PC-9 (cell line): ENCODE measurements at regions of chr6 and their contacts with region 1.

Region 1: GRCh38 chr6:4272996-4273395 is 137.6 kb upstream of the ECI2 start:
- DNase-seq: no peak
- H3K4me3 ChIP-seq: no peak overlapping the region
- H3K27ac ChIP-seq: no peak overlapping the region
- H3K4me1 ChIP-seq: no peaks in the 10 kb centered on the region
- H3K27me3 ChIP-seq: no peaks in the 10 kb centered on the region
- CTCF ChIP-seq: no peak

Region 2: DNA sequence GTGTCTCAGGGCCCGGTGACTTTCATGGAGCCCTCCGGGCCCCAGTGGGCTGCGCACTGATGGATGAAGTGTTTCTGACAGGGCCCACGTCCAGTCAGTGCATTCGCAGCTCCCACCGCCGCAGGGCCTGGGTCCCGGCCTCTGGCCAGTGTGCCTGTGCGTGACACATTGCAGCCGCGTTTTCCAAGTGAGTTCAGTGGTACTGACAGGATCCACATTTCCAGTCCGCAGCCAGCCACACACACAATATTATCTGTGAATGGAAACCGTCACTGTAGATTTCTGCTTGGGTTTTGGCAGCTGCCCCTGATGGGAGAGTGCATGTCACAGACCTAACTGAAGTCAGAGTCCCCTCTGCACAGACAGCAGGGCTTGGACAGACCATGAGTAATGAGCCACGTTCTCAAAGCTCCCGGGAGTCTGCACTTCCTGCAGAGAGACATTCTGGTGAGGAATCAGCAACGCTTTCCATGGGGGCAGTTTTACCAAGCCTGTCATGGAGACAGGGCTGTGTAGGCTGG is 1693.7 kb before region 1 on chr6:
- CTCF ChIA-PET with region 1: interaction called, 13 read pairs
- POLR2A ChIA-PET with region 1: no interaction called
- intact Hi-C with region 1: no loop called
- DNase-seq: no peak
- H3K4me3 ChIP-seq: no peak overlapping the region
- H3K27ac ChIP-seq: peak overlapping the region; percentile 83
- H3K4me1 ChIP-seq: peaks cover 20% of the 10 kb centered on the region
- H3K27me3 ChIP-seq: no peaks in the 10 kb centered on the region
- CTCF ChIP-seq: no peak

Region 3: DNA sequence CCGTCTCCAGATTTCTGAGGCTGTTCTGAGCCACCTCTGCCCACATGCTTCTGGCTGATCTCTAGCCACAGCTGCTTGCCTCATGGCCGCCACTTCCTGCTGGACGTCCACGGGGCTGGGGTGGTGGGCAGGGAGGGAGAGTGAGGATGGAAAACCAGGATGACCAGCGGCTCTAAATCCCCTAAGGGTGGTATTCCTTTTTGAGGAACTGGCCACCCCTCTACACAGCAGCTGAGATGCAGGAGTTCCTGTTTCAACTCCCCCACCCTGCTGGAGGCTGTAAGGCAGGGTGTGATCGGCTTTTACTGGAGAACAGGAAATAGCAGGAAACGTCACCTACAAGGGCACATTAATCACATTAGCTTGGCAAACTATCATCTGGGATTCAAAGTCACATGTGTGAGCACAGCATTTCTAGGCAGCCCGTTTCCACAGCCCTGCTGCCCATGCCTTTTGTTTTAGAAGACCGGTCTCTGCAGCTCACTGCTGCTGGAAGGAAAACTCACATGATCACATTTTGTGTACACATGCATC is 43.9 kb after region 1 on chr6:
- CTCF ChIA-PET with region 1: no interaction called
- POLR2A ChIA-PET with region 1: no interaction called
- intact Hi-C with region 1: no loop called
- DNase-seq: peak; percentile 45 to 51
- H3K4me3 ChIP-seq: no peak overlapping the region
- H3K27ac ChIP-seq: no peak overlapping the region
- H3K4me1 ChIP-seq: peaks cover 61% of the 10 kb centered on the region
- H3K27me3 ChIP-seq: no peaks in the 10 kb centered on the region
- CTCF ChIP-seq: no peak

Region 4: DNA sequence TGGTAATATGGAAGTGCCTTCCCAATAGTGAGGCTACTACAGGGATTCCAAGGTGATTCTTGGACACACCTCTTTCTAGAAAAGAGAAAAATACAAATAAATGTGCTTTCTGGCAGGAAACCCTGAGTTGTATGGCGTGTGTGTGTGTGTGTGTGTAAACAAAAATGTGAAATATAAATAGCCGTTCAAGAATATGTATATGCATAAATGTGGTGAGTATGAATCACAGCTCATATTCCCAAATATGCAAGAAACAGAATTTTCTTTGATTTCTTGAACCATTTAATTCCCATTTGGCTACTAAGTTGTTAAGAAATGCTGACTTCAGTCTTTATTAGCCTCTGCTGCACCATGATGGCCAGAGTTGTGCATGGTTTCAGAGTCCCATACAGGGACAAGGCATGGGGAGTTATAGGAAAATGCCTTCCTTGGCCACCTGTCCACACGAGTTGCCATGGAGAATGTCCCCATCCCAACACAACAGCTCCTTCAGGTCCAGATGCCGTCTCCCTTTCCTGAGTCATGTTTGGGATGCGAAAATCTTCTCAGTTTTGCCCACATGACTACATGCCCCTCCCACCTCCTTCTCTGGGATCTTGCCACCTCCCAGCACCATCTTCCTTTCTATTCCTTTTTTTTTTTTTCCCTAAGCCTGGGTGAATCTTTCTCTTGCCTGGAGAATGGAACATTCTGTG is 174.8 kb after region 1 on chr6:
- CTCF ChIA-PET with region 1: no interaction called
- POLR2A ChIA-PET with region 1: no interaction called
- intact Hi-C with region 1: no loop called
- DNase-seq: no peak
- H3K4me3 ChIP-seq: no peak overlapping the region
- H3K27ac ChIP-seq: no peak overlapping the region
- H3K4me1 ChIP-seq: 0 out of 2 replicates have a peak, but pooled peaks cover 6% of the 10 kb centered on the region
- H3K27me3 ChIP-seq: no peaks in the 10 kb centered on the region
- CTCF ChIP-seq: no peak